ENCODE measurements at regions of chr1 and their contacts with region 1.

Region 1: GRCh38 chr1:111769517-111770146 is 13.9 kb downstream of the DDX20 start:
- DNase-seq: no peak
- H3K4me3 ChIP-seq: no peak overlapping the region
- CTCF ChIP-seq: peak in 1 of 3 donors; percentile 60
- POLR2A ChIP-seq: no peak

Region 2: DNA sequence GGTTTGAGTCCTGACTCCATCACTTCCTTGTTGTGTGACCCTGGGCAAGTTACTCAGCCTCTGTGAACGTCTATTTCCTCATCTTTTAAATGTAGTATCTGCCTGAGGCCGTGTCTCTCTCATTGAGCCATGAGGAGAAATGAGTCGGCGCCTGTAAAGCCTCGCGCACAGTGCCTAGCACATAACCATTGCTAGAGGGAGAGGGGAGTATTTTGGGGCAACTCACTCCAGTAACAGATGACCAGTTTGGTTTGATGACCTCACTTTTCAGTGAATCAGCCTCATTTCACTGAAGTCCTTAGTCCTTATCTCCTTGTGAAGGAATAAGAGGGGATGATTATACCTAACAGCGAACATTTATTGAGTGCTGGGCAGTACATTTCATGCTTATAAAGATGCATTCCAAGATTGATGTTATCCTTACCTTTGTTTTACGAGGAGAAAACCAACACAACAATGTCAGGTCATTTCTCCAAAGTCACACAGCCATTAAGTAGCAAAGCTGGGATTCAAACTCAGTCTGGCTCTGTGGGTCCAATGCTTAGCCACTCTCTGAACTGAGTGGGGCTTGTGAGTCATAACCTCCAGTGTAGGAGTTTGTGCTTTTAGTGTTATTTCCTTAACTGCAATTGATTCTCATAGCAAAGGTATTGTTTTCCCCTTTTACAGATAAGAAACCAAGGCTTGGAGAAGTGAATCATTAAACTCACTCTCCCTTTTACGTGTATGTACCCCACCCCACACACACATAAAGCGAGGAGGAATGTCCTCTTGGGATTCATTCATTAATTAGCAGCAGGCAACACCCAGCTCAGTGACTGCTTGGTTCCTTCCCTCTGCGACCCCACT is 1533.6 kb before region 1 on chr1:
- intact Hi-C with region 1: loop called (anchors 10 kb)
- DNase-seq: no peak
- H3K4me3 ChIP-seq: no peak overlapping the region
- CTCF ChIP-seq: no peak
- POLR2A ChIP-seq: no peak

Region 3: DNA sequence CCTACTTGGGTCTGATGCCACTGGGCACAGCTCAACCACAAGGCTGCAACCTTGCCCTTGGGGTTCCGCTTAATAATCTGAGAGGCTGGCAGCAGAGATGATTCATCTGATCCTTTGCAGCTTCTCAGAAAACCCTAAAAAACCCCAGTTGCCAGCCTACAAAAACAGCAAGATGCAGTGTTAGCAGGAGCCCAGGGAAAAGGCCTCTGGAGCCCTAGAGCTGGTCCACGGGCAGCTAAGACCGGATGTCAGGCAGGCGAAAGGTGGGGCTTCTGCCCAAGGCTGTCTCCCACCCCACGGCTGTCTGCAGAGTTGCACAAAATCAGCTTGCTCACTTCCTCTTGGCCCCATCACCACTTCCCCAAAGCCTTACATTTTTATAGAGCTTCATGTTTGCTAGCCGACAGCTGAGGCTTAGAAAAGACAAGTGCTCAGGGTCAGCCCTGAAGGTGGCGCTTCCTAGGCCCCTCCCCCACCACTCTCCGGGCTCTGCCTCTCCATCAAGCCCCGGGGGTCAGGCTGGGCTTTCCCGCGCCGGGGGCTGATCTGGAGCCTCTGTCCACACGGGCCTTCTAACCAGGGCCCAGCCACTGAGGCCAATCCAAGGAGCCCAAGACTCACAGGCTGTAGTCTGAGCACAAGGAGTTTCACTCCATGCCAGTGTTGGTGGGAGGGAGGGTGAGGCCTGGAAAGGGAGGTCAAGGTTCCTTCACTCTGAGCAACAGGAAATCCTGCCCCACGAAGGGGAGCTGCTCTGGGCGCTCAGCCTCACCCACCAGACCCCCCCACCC is 262.0 kb before region 1 on chr1:
- intact Hi-C with region 1: loop called (anchors 5 kb)
- DNase-seq: peak; percentile 77 to 94
- H3K4me3 ChIP-seq: no peak overlapping the region
- CTCF ChIP-seq: no peak
- POLR2A ChIP-seq: no peak

Region 4: GRCh38 chr1:111719674-111720132 is 49.9 kb before region 1 on chr1:
- intact Hi-C with region 1: loop called (anchors 10 kb)
- DNase-seq: no peak
- H3K4me3 ChIP-seq: no peak overlapping the region
- CTCF ChIP-seq: no peak
- POLR2A ChIP-seq: no peak

Region 5: DNA sequence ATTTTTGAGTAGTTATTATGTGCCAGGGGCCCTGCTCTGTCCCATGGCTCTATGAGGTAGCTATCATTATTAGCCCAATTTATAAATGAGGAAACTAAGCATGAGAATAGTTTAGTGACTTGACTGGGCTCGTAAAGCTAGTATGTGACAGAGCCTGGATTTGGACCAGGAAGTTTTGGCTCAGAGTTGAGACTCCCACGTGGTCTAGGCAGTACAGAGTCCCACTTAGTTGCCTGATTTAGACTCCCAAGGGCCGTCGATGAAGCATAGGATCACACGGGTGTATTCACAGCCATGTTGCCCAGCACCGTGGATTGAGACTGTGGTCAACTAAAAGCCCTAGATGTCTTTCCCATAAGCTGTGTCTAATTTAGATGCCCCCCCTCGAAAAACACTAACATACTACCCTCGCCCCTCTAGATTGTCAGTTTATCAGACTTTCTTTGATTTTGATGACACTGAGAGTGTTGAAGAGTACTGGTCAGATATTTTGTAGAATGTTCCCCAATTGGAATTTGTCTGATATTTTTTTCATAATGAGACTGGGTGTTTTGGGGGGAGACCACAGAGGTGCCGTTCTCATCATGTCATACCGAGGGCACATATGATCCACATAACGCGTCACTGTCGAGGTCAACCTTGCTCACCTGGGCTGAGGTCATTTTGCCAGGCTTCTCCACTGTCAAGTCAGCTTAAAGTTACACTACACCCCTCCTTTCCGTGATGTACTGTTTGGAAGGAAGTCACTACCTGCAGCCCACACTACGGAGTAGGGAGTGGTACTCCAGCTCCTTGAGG is 68.0 kb after region 1 on chr1:
- intact Hi-C with region 1: no loop called
- DNase-seq: no peak
- H3K4me3 ChIP-seq: no peak overlapping the region
- CTCF ChIP-seq: no peak
- POLR2A ChIP-seq: no peak

Measured in lower leg skin (tissue), 4 donors.